ENCODE measurements at regions of chr19 and their contacts with region 1.

Region 1: GRCh38 chr19:42290523-42291438 is 11.2 kb upstream of the PRR19 start:
- DNase-seq: peak in 1 of 4 donors; percentile 23
- ATAC-seq: no peak
- H3K4me3 ChIP-seq: no peak overlapping the region
- H3K27ac ChIP-seq: no peak overlapping the region
- H3K4me1 ChIP-seq: peaks cover 12% of the 10 kb centered on the region
- H3K27me3 ChIP-seq: no peaks in the 10 kb centered on the region
- CTCF ChIP-seq: peak in 5 of 7 experiments; percentile 12 to 26 (median 21)
- POLR2A ChIP-seq: no peak

Region 2: DNA sequence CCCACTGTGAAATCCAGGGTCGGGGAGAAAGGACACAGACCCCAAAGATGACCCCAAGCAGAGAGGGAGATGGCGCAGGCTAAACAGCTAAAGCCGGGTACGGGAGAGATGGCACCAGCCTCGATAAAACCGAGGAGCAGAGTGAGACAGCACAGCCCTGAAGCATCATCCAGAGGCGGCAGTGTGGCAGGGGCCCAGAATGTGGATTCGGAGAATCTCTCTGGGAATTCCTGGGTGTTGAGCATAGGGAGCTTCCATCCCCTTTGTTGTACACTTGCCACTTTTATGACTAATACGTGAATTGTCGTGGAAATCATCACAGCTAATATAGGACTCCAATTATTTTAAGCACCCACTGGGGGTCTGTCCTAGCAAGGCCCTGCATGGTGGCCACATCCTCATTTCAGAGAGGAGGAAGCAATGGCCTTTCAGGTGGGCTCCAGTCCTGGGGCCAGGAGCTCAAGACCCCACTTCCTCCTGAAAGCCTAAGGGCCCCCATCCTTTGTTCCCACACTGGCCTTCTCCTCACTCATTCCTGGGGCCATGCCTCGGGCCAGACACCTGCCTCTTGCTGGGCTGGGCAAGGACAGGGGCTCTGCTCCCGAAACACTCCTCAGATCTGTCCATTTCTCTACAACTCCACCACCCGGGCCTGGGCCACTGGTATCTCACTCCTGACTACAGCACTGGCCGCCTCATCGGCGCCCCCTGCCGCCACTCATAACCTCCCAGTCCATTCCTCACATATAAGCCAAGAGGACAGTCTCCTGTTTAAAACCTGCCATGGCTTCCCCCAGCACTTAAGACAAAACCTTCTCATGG is 267.4 kb before region 1 on chr19:
- intact Hi-C with region 1: no loop called
- DNase-seq: no peak
- ATAC-seq: no peak
- H3K4me3 ChIP-seq: no peak overlapping the region
- H3K27ac ChIP-seq: no peak overlapping the region
- H3K4me1 ChIP-seq: no peaks in the 10 kb centered on the region
- H3K27me3 ChIP-seq: no peaks in the 10 kb centered on the region
- CTCF ChIP-seq: peak in 1 of 7 experiments; percentile 8
- POLR2A ChIP-seq: no peak

Region 3: GRCh38 chr19:42244347-42245220 is 46.2 kb before region 1 on chr19:
- intact Hi-C with region 1: loop called (anchors 5 kb)
- DNase-seq: peak; percentile 90 to 93 (median 91)
- ATAC-seq: peak; percentile 39
- H3K4me3 ChIP-seq: peak overlapping the region; percentile 2 to 26
- H3K27ac ChIP-seq: peak overlapping the region; percentile 72 to 94 (median 83)
- H3K4me1 ChIP-seq: peaks cover 50% of the 10 kb centered on the region
- H3K27me3 ChIP-seq: no peaks in the 10 kb centered on the region
- CTCF ChIP-seq: peak; percentile 36 to 80 (median 64)
- POLR2A ChIP-seq: peak; percentile 9 to 82 (median 72)

Region 4: GRCh38 chr19:42386974-42387707 is 96.4 kb after region 1 on chr19:
- intact Hi-C with region 1: no loop called
- DNase-seq: peak; percentile 59 to 74 (median 63)
- ATAC-seq: peak; percentile 82
- H3K4me3 ChIP-seq: peak overlapping the region in 1 of 2 donors; percentile 9
- H3K27ac ChIP-seq: peak overlapping the region; percentile 11 to 74 (median 34)
- H3K4me1 ChIP-seq: peaks cover 8% of the 10 kb centered on the region
- H3K27me3 ChIP-seq: no peaks in the 10 kb centered on the region
- CTCF ChIP-seq: peak in 6 of 7 experiments; percentile 14 to 53 (median 46)
- POLR2A ChIP-seq: peak in 1 of 3 donors; percentile 30

Region 5: DNA sequence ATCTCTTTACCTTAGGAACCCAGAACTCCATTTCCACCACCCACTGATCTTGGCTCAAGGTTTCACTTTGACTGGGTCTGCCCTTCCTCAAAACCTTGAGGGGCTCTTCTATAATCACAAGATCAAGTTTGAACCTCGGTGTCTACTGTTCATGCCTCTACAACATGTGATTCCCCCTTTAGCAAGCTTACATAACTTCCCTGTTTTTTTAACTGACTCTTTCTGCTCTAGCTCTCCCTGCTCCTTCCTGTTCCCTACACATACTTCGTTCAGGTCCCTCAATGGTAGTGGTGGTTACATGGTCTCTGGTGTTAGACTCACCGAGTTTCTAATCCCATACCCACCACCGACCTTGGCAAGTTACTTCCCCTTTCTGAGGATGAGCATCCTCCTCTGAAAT is 277.2 kb after region 1 on chr19:
- intact Hi-C with region 1: no loop called
- DNase-seq: no peak
- ATAC-seq: no peak
- H3K4me3 ChIP-seq: no peak overlapping the region
- H3K27ac ChIP-seq: no peak overlapping the region
- H3K4me1 ChIP-seq: no peaks in the 10 kb centered on the region
- H3K27me3 ChIP-seq: no peaks in the 10 kb centered on the region
- CTCF ChIP-seq: no peak
- POLR2A ChIP-seq: no peak

Measured in body of pancreas (tissue), 4 donors.